MCF 10A (cell line): ENCODE measurements at regions of chr1 and their contacts with region 1.

Region 1: DNA sequence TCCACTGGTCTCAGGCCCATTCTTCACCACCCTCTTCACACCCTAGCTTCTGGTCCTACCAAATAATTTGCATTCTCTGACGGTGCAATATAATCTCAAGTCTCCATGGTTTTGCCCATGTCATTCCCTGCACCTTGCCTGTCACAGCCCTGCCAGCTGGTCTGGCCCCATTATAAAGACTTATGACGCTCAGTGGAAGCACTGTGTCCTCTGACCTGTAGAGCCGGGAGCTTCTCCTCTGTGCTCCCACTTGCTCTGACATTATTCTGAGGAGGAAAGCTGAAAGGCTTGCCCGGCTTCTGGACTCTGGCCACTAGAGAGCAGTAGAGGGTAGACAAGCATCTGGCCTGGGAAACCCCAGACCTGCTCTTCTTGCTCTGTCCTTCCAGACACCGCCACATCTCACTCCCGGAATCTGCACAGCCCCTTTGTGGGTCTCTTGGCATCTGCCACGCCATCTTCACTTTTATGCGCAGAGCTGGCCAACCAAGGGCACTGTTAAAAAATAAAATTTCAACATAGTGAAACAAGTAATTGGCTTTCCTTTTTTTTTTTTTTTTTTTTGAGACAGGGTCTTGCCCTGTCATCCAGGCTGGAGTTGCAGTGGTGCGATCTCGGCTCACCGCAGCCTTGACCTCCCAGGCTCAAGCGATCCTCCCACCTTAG is 44.4 kb downstream of the NENF start:
- DNase-seq: peak; percentile 96
- H3K4me3 Mint-ChIP-seq: no peak overlapping the region
- H3K27ac Mint-ChIP-seq: peak overlapping the region; percentile 46
- H3K4me1 Mint-ChIP-seq: peaks cover 17% of the 10 kb centered on the region
- H3K27me3 Mint-ChIP-seq: no peaks in the 10 kb centered on the region
- CTCF ChIP-seq: peak; percentile 99

Region 2: DNA sequence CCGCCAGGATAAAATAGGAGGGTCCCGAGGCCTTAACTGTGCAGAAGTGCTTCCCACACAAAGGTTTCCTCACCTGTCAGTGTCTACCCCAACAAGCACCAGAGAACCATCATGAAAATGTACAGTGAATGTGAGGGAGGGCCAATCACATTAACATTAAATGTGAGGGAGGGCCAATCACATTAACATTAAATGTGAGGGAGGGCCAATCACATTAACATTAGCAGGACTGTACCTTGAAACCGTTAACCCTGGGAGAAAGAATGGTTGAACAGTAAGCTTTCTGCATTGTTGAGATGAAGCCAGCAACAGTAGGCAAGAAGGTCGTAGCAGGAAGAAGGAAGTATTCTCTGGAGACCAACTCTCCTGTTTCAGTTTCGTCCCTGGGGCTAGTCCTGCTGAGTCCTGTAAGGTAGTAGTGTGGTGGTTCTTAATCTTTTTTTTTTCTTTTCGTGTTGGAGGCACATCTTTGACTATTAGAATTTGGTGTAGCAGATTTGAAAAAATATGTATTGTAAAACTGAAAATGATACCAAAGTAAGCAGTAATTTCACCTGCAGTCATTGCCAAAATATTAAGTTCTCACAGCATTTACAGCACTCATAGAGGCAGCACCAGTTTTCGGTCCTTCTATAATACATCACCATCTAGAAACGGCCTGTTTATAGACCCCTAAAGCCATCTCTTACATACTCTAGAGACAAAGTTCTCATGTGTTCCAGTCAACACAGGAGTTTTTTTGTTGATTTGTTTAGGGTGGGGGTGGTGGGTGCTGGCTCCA is 290.5 kb before region 1 on chr1:
- CTCF ChIA-PET with region 1: no interaction called
- POLR2A ChIA-PET with region 1: no interaction called
- intact Hi-C with region 1: no loop called
- DNase-seq: no peak
- H3K4me3 Mint-ChIP-seq: no peak overlapping the region
- H3K27ac Mint-ChIP-seq: no peak overlapping the region
- H3K4me1 Mint-ChIP-seq: peaks cover 11% of the 10 kb centered on the region
- H3K27me3 Mint-ChIP-seq: no peaks in the 10 kb centered on the region
- CTCF ChIP-seq: no peak

Region 3: DNA sequence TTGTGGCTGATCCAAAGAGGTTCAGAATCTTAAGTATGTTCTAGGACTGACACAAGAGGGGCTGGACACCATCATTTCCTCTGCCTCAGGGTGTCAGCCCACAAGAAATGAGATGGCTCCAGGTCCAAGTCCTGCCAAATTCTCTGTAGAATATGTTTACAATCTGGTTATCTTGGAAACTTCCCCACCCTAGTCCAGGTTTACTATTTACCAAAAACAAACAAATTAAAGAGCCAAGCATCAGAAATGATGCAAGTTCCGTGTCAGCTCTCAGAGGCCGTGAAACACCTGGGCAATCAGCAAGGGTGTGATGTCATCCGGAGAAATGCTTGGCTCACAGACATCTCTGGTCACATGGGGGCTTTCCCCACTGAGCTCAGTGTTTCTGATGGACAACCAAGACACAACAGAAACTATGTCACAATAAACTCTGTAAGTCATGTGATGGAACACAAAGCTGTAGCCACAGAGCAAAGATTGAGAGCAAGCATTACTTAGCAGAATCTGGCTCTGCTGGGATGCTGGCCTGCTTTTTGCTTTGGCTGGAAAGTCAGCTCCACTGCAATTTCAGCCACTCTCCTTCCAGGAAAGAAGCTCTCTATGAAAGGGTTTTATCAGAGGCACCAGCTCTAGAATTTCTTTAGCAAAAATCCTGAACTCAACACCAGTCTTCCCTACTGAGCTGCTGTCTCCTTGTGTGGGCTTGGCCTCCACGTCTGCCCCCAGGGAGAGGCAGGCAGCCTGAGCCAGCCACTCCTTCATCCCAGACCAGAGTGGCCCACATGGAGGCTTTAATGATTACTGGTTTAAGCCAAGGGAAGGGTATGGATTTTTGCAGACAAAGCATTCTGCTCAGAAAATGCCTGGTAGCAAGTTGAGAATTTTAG is 11.5 kb after region 1 on chr1:
- CTCF ChIA-PET with region 1: interaction called, 50 read pairs
- POLR2A ChIA-PET with region 1: interaction called, 20 read pairs
- intact Hi-C with region 1: no loop called
- DNase-seq: peak; percentile 93
- H3K4me3 Mint-ChIP-seq: no peak overlapping the region
- H3K27ac Mint-ChIP-seq: peak overlapping the region; percentile 97
- H3K4me1 Mint-ChIP-seq: peaks cover 41% of the 10 kb centered on the region
- H3K27me3 Mint-ChIP-seq: no peaks in the 10 kb centered on the region
- CTCF ChIP-seq: no peak

Region 4: GRCh38 chr1:212539737-212540430 is 62.7 kb after region 1 on chr1:
- CTCF ChIA-PET with region 1: interaction called, 11 read pairs
- POLR2A ChIA-PET with region 1: no interaction called
- intact Hi-C with region 1: no loop called
- DNase-seq: no peak
- H3K4me3 Mint-ChIP-seq: no peak overlapping the region
- H3K27ac Mint-ChIP-seq: no peak overlapping the region
- H3K4me1 Mint-ChIP-seq: no peaks in the 10 kb centered on the region
- H3K27me3 Mint-ChIP-seq: peaks cover under 1% of the 10 kb centered on the region
- CTCF ChIP-seq: no peak

Region 5: GRCh38 chr1:212608209-212608955 is 131.2 kb after region 1 on chr1 and contains the start of gene ATF3:
- CTCF ChIA-PET with region 1: interaction called, 26 read pairs
- POLR2A ChIA-PET with region 1: interaction called, 94 read pairs
- intact Hi-C with region 1: loop called (anchors 1 kb)
- DNase-seq: peak; percentile 100
- H3K4me3 Mint-ChIP-seq: peak within 1 kb of the TSS; percentile 72
- H3K27ac Mint-ChIP-seq: peak within 1 kb of the TSS; percentile 98
- H3K4me1 Mint-ChIP-seq: peaks cover 37% of the 10 kb centered on the region
- H3K27me3 Mint-ChIP-seq: peaks cover 75% of the 10 kb centered on the region
- CTCF ChIP-seq: no peak
- total RNA-seq, gene ATF3: 85.3 and 114 TPM in 2 replicates

Region 6: GRCh38 chr1:212671342-212672031 is 194.3 kb after region 1 on chr1:
- CTCF ChIA-PET with region 1: interaction called, 19 read pairs
- POLR2A ChIA-PET with region 1: no interaction called
- intact Hi-C with region 1: no loop called
- DNase-seq: peak; percentile 95
- H3K4me3 Mint-ChIP-seq: peak overlapping the region; percentile 50
- H3K27ac Mint-ChIP-seq: peak overlapping the region; percentile 29
- H3K4me1 Mint-ChIP-seq: peaks cover 31% of the 10 kb centered on the region
- H3K27me3 Mint-ChIP-seq: no peaks in the 10 kb centered on the region
- CTCF ChIP-seq: no peak

Region 7: DNA sequence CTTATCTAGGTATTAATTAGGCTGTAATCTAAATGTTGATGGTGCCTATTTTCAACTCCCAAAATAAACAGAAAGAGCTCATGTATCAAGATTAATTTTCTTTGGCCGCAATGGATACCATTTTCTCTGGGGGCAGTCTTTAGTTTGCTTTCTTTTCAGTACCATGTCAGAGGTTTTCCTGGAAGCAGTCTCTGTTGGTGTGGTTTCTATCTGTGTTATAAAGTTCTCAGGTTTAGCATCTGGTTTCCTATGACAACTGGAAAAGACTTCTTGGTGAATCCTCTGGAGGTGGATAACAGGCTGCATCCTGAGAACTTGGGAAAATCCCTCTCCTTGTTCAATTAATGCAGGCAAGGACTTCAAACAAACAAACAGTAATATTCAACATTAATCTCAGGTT is 261.2 kb after region 1 on chr1:
- CTCF ChIA-PET with region 1: interaction called, 91 read pairs
- POLR2A ChIA-PET with region 1: no interaction called
- intact Hi-C with region 1: no loop called
- DNase-seq: no peak
- H3K4me3 Mint-ChIP-seq: no peak overlapping the region
- H3K27ac Mint-ChIP-seq: no peak overlapping the region
- H3K4me1 Mint-ChIP-seq: no peaks in the 10 kb centered on the region
- H3K27me3 Mint-ChIP-seq: no peaks in the 10 kb centered on the region
- CTCF ChIP-seq: no peak

Region 8: DNA sequence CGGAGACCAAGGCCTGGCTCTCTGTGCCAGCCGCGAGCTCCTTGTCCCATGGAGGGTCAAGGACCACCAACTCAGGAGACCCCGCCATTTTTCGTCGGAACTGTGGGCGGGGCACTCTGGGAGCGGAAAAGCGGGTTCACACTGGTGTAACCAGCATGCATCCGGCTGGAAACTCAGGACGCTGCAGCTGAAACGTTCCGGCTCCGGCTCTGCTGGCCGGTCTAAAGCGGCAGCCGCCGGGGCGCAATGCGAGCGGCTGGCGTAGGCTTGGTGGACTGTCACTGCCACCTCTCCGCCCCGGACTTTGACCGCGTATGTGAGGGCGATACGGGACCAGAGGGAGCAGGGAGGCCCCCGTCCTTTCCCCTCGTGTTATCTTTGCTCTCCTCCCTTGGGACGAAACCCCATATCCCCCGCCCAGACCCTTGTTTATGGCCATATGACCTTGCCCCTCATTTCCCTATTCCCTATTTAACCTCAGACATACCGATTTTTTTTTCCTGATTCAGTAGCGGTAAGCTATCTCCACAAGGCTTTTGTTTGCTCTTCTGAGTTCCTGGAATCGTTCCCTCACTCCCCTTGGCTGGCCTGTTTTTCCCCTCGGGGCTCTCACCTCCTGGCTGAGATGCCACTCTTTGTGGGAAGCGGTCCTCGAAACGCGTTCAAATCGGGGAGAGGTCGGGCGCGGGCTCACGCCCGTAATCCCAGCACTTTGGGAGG is 314.7 kb after region 1 on chr1 and contains the starts of genes NSL1 and TATDN3:
- CTCF ChIA-PET with region 1: interaction called, 33 read pairs
- POLR2A ChIA-PET with region 1: interaction called, 23 read pairs
- intact Hi-C with region 1: no loop called
- DNase-seq: peak; percentile 98
- H3K4me3 Mint-ChIP-seq: peak within 1 kb of the TSS; percentile 83
- H3K27ac Mint-ChIP-seq: peak within 1 kb of the TSS; percentile 90
- H3K4me1 Mint-ChIP-seq: peaks cover 19% of the 10 kb centered on the region
- H3K27me3 Mint-ChIP-seq: no peaks in the 10 kb centered on the region
- CTCF ChIP-seq: no peak
- total RNA-seq, gene NSL1: 39.7 and 42.2 TPM in 2 replicates
- total RNA-seq, gene TATDN3: 31.5 and 35.7 TPM in 2 replicates